Heart right ventricle (tissue), 16 donors: ENCODE measurements at regions of chr14 and their contacts with region 1.

Region 1: GRCh38 chr14:54642801-54643697 is 76.1 kb downstream of the SAMD4A start:
- DNase-seq: no peak
- ATAC-seq: peak in 1 of 8 donors; percentile 7
- H3K4me3 ChIP-seq: no peak overlapping the region
- H3K27ac ChIP-seq: peak overlapping the region in 2 of 10 donors; percentile 7 to 37
- H3K4me1 ChIP-seq: peaks cover 3 to 90% (median 51%) of the 10 kb centered on the region in 9 donors
- H3K27me3 ChIP-seq: no peaks in the 10 kb centered on the region
- CTCF ChIP-seq: peak in 4 of 9 donors; percentile 19 to 36 (median 32)

Region 2: DNA sequence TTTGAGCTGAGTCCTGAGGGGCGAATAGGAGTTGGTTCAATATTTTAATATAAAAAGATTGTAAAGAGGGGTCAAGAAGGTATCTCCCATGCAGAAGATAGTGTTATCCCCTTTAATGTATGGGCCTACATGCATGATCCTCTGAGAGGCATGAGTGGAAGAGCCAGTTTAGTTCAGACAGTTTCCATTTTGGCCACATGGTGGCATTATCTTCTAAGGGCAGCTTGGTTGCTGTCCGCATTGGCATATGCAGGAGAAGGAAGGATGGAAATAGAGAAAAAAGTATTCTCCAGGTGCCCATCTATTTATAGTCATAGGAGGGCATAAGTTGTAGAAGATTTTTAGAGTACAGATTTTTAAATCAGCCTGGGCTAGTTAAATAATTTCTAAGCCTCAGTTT is 70.7 kb before region 1 on chr14:
- intact Hi-C with region 1: loop called in 2 of 10 experiments (anchors 5 to 10 kb)
- DNase-seq: no peak
- ATAC-seq: no peak
- H3K4me3 ChIP-seq: no peak overlapping the region
- H3K27ac ChIP-seq: no peak overlapping the region
- H3K4me1 ChIP-seq: peaks cover 6 to 92% (median 61%) of the 10 kb centered on the region in 9 donors
- H3K27me3 ChIP-seq: peaks cover 0 to 16% (median 0%) of the 10 kb centered on the region in 7 donors
- CTCF ChIP-seq: peak in 8 of 9 donors; percentile 25 to 58 (median 44)

Region 3: DNA sequence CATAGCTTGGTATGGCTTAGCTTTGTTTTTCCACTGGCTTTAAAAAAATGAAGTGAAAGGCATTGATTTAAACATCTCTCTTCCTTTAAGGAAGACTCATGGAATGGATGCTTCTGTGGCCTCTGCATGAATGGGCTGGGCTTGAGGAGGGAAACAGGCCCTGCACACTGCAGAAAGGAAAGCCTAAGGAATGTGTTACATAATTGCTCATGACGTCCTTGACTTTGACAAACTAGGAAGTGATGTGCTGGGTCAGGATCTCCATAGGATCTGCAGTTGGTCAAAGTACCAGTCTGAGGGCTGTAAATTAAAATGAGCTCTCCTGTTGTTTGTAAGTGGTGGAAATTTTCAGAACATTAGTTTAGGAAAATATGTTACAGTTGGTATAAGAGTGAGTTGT is 63.4 kb before region 1 on chr14:
- intact Hi-C with region 1: loop called in 2 of 10 experiments (anchors 5 to 10 kb)
- DNase-seq: no peak
- ATAC-seq: peak in 6 of 8 donors; percentile 45 to 67 (median 60)
- H3K4me3 ChIP-seq: no peak overlapping the region
- H3K27ac ChIP-seq: peak overlapping the region in 7 of 10 donors; percentile 16 to 64 (median 37)
- H3K4me1 ChIP-seq: peaks cover 4 to 96% (median 75%) of the 10 kb centered on the region in 9 donors
- H3K27me3 ChIP-seq: no peaks in the 10 kb centered on the region
- CTCF ChIP-seq: no peak

Region 4: GRCh38 chr14:54691525-54692283 is 48.7 kb after region 1 on chr14:
- intact Hi-C with region 1: loop called in 1 of 10 experiments (anchors 5 kb)
- DNase-seq: peak; percentile 70 to 85
- ATAC-seq: peak; percentile 71 to 88 (median 82)
- H3K4me3 ChIP-seq: no peak overlapping the region
- H3K27ac ChIP-seq: peak overlapping the region in 9 of 10 donors; percentile 14 to 96 (median 75)
- H3K4me1 ChIP-seq: peaks cover 11 to 86% (median 52%) of the 10 kb centered on the region in 9 donors
- H3K27me3 ChIP-seq: no peaks in the 10 kb centered on the region
- CTCF ChIP-seq: peak; percentile 83 to 95 (median 91)